ENCODE measurements at regions of chr17 and their contacts with region 1.

Region 1: GRCh38 chr17:48724251-48725003 is 1.4 kb downstream of the PRAC2 start:
- DNase-seq: peak; percentile 49 to 92
- H3K4me3 ChIP-seq: no peak overlapping the region
- H3K4me1 ChIP-seq: peaks cover 7% of the 10 kb centered on the region
- H3K27me3 ChIP-seq: no peaks in the 10 kb centered on the region

Region 2: GRCh38 chr17:48791128-48792032 is 67.0 kb after region 1 on chr17:
- in situ Hi-C with region 1: loop called (anchors 5 kb)
- DNase-seq: peak; percentile 79 to 91
- H3K4me3 ChIP-seq: no peak overlapping the region
- H3K4me1 ChIP-seq: no peaks in the 10 kb centered on the region
- H3K27me3 ChIP-seq: no peaks in the 10 kb centered on the region

Region 3: DNA sequence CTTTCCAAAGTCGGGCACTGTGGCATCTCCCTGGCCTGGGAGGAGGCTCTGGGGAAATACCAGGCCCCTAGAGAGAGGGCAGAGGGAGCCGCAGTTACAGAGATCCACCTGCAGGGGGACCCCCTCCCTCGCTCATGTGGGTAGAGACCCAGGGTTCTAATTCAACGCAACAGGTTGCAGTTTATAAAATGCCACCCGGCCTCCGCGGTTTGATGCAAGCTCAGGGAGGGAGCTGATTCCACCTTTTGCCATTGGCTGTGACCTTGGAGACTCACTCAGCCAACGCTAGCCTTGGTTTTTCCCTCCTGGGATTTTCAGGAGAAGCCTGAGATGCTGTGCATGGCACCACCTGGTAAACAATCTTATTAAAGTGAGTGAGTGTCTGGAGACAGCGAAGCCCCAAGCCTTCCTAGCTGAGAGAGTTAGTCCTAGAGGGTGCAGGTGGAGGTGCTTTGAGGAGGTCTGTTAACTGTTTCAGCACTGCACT is 80.5 kb after region 1 on chr17:
- in situ Hi-C with region 1: no loop called
- DNase-seq: peak; percentile 40 to 87
- H3K4me3 ChIP-seq: no peak overlapping the region
- H3K4me1 ChIP-seq: peaks cover 2% of the 10 kb centered on the region; the same call in 1 of the 2 replicates
- H3K27me3 ChIP-seq: 0 out of 2 replicates have a peak, but pooled peaks cover 3% of the 10 kb centered on the region